ENCODE measurements at regions of chr16 and their contacts with region 1.

Region 1: GRCh38 chr16:48632137-48632774 is 22.3 kb upstream of the N4BP1 start:
- DNase-seq: no peak
- ATAC-seq: no peak
- H3K4me3 ChIP-seq: no peak overlapping the region
- H3K27ac ChIP-seq: no peak overlapping the region
- H3K4me1 ChIP-seq: peaks cover 0 to 10% (median 1%) of the 10 kb centered on the region in 12 donors
- H3K27me3 ChIP-seq: no peaks in the 10 kb centered on the region
- CTCF ChIP-seq: no peak
- POLR2A ChIP-seq: no peak

Region 2: DNA sequence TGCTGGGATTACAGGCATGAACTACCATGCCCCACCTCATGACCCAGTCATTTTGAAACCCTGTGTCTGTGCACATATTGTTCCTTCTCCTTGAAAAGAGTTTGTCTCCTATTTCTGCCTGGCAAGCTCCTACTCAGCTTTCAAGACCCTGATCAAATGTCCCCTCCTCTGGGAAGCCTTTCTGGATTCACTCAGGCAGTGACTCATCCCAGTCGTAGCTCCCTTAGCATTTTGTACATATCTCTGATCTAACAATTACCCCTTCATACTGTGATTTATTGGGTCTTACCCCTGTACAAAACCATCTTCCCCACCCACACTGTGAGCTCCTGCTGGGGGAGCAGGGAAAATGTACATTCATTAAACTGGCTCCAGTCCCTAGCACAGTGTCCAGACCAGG is 458.4 kb before region 1 on chr16:
- intact Hi-C with region 1: loop called in 1 of 10 experiments (anchors 10 kb)
- DNase-seq: no peak
- ATAC-seq: no peak
- H3K4me3 ChIP-seq: no peak overlapping the region
- H3K27ac ChIP-seq: no peak overlapping the region
- H3K4me1 ChIP-seq: no peaks in the 10 kb centered on the region
- H3K27me3 ChIP-seq: no peaks in the 10 kb centered on the region
- CTCF ChIP-seq: no peak
- POLR2A ChIP-seq: no peak

Region 3: DNA sequence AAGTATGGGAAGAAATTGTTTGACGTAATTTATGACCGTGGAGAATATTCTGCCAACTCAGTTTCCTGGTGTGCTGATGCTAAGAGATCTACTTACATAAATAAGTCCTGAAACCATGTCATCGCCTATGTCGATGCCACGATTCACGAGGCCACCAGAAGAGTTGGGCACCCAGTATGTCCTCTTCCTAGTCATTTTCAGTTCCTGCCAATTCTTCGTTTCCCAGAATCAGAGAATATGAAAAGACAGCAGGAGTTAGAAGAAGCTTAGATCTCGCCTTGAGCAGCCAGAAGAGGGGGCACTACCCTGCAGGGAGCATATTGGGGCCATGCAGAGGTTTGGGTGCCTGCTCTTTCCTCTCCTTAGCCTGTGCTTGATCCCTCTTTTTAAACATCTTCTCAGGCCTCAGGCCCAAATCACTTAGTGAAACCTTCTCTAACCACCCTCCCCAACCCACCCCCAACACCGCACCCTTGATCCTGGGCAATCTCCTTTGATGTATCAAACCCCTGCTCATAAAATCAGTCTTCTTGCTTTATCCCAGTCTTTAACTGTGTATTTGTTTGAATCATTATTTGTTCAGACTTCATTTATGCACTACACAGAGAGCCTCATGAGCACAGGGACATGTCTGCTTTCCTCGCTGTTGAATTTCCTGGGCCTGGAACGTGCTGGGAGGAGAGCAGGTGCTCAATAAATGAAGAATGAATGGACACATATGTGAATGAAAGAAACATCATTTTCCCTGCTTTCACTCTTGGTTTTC is 400.3 kb before region 1 on chr16:
- intact Hi-C with region 1: loop called in 5 of 10 experiments (anchors 5 to 10 kb)
- DNase-seq: no peak
- ATAC-seq: peak in 2 of 4 donors; percentile 53 to 65
- H3K4me3 ChIP-seq: no peak overlapping the region
- H3K27ac ChIP-seq: no peak overlapping the region
- H3K4me1 ChIP-seq: peaks cover 0 to 11% (median 0%) of the 10 kb centered on the region in 12 donors
- H3K27me3 ChIP-seq: no peaks in the 10 kb centered on the region
- CTCF ChIP-seq: peak in 8 of 12 donors; percentile 21 to 48 (median 33)
- POLR2A ChIP-seq: no peak

Region 4: DNA sequence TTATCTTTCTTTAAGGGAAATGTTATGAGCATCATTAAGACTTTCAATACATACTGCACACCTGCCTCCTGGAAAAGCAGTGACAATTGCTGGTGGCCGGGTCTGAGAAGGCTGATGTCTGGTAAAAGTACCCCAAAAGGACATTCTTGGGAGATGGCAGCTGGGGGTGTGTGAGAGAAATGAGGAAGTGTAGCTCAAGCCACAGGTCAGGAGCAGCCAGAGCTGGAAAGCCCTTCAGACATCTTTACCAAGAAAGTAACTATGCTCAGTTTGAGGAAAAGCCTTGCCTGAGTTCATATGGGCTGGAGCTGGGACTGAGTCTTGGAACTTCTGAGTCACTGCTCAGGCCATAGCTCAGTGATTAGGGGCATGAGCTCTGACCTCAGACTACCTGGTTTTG is 72.5 kb after region 1 on chr16:
- intact Hi-C with region 1: no loop called
- DNase-seq: no peak
- ATAC-seq: no peak
- H3K4me3 ChIP-seq: no peak overlapping the region
- H3K27ac ChIP-seq: no peak overlapping the region
- H3K4me1 ChIP-seq: no peaks in the 10 kb centered on the region
- H3K27me3 ChIP-seq: no peaks in the 10 kb centered on the region
- CTCF ChIP-seq: no peak
- POLR2A ChIP-seq: no peak